Activated T-helper 1 cell treated with anti-CD3 and anti-CD28 coated beads, Interleukin-12 subunit alpha, Interleukin-12 subunit beta, Interleukin-2, Interleukin-4 antibody, amounts not matched to agents 30 ng/mL and 10 ng/mL and 1 ng/mL, durations not matched to agents 14 hours and 24 hours and 36 hours (primary cell): ENCODE measurements at regions of chr1 and their contacts with region 1.

Region 1: DNA sequence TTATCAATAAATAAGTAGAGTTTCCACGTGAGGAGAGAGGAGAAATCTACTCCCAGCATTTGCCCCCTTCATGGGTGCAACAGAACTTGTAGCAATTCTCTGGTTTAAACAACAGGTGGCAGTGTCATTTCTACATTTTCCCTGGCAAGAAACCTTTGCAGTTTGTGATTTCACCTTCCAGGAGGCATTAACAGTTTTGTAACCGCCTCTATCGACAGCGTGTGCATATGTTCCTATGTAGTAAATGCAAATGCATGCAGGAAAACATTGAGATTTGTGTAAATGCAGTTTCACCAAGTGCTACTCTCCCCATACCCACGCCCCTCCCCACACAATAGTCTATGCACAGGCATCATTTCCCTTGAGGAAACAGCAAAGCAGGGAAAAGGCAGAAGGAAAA is 494.7 kb downstream of the SMYD3 start:
- DNase-seq: peak; percentile 1
- H3K4me3 Mint-ChIP-seq: no peak overlapping the region
- H3K27ac Mint-ChIP-seq: no peak overlapping the region
- H3K4me1 Mint-ChIP-seq: no peaks in the 10 kb centered on the region
- H3K27me3 Mint-ChIP-seq: no peaks in the 10 kb centered on the region

Region 2: DNA sequence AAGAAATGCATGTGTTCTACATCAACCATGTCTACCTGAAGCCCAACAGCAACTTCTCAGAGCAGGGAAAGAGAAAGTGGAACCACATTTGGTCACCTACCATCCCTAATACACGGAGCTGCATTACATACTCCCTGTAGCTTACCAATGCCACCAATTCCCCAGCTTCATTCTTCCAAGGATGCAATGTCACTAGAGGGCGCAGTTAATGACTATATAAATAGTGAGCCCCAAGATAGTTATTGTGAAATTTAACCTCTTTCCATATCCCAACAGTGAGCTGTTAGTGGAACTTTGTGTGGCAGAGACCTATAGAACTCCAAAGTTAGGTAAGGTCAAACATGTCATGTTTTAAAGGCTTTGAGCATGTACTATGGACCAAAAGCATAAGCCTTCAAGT is 123.5 kb before region 1 on chr1:
- intact Hi-C with region 1: no loop called
- DNase-seq: no peak
- H3K4me3 Mint-ChIP-seq: no peak overlapping the region
- H3K27ac Mint-ChIP-seq: no peak overlapping the region
- H3K4me1 Mint-ChIP-seq: no peaks in the 10 kb centered on the region
- H3K27me3 Mint-ChIP-seq: no peaks in the 10 kb centered on the region

Region 3: GRCh38 chr1:246117066-246117791 is 104.9 kb after region 1 on chr1:
- intact Hi-C with region 1: loop called (anchors 5 kb)
- DNase-seq: peak; percentile 1
- H3K4me3 Mint-ChIP-seq: peak overlapping the region; percentile 64
- H3K27ac Mint-ChIP-seq: no peak overlapping the region
- H3K4me1 Mint-ChIP-seq: peaks cover 11% of the 10 kb centered on the region
- H3K27me3 Mint-ChIP-seq: no peaks in the 10 kb centered on the region

Region 4: DNA sequence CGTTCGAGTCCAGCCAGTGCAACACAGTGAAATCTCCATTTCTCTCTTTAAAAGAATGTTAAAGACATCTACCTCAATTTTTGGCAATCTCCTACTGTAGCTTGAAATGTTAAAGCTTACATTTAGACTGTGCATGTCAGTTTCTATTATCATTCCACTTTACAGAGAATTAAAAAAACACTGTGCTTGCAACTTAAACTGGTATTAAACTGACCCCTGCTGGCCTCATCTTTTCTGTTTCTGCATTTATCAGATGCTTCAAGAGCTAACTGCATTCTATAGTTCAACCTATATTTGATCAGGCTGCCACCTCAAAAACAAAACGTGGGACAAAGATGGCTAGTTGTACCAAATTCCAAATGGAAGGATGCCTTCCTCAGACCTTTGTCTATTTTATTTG is 268.2 kb after region 1 on chr1:
- intact Hi-C with region 1: loop called (anchors 1 kb)
- DNase-seq: no peak
- H3K4me3 Mint-ChIP-seq: no peak overlapping the region
- H3K27ac Mint-ChIP-seq: no peak overlapping the region
- H3K4me1 Mint-ChIP-seq: no peaks in the 10 kb centered on the region
- H3K27me3 Mint-ChIP-seq: no peaks in the 10 kb centered on the region

Region 5: GRCh38 chr1:246450611-246451251 is 438.4 kb after region 1 on chr1:
- intact Hi-C with region 1: loop called (anchors 1 kb)
- DNase-seq: no peak
- H3K4me3 Mint-ChIP-seq: no peak overlapping the region
- H3K27ac Mint-ChIP-seq: no peak overlapping the region
- H3K4me1 Mint-ChIP-seq: no peaks in the 10 kb centered on the region
- H3K27me3 Mint-ChIP-seq: no peaks in the 10 kb centered on the region

Region 6: DNA sequence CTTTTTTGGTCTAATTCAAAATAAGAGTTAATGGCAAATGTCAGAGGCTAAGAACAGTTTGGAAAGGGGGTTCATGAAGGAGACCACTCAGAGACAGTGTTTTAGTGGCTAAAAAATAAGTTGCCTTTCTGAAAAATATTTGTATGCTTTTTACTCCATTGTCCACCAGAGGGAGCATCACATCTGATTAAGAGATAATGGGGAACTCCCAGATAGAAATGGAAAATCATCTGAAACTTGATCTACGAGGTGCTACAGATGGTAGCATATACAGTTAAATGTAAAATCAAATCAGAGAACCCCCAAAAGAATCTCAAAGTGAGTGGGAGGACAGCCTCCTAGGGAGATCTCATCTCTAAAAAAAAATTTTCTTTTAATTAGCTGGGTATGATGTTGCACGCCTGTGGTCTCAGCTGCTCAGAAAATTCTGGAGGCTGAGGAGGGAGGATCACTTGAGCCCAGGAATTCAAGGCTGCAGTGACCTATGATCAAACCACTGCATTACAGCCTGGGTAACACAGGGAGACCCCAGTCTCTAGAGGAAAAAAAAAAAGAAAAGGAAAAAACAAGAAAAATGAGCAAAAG is 485.1 kb after region 1 on chr1:
- intact Hi-C with region 1: loop called (anchors 1 kb)
- DNase-seq: no peak
- H3K4me3 Mint-ChIP-seq: no peak overlapping the region
- H3K27ac Mint-ChIP-seq: peak overlapping the region; percentile 26
- H3K4me1 Mint-ChIP-seq: peaks cover 11% of the 10 kb centered on the region
- H3K27me3 Mint-ChIP-seq: no peaks in the 10 kb centered on the region

Region 7: DNA sequence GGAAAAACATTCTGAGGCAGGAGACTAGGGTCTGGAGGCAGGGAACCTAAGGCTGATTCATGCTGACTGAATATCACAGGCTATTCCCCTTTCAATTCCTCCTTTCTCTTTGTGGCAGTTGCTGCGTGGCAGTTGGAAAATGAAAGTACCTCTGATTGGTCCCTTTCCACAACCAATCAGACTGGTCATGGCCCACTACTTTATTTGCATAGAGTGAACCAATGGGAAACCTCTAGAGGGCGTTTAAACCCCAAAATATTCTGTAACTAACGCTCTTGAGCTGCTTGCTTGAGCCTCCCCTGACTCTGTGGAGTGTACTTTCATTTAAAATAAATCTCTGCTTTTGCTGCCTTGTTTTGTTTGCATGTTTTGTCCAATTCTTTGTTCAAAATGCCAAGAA is 1215.8 kb after region 1 on chr1:
- intact Hi-C with region 1: no loop called
- DNase-seq: no peak
- H3K4me3 Mint-ChIP-seq: no peak overlapping the region
- H3K27ac Mint-ChIP-seq: no peak overlapping the region
- H3K4me1 Mint-ChIP-seq: no peaks in the 10 kb centered on the region
- H3K27me3 Mint-ChIP-seq: no peaks in the 10 kb centered on the region